ENCODE measurements at regions of chr19 and their contacts with region 1.

Region 1: GRCh38 chr19:51735759-51736449 is 12.1 kb upstream of the HAS1 start:
- DNase-seq: peak; percentile 97 to 100 (median 99)
- H3K4me3 ChIP-seq: peak overlapping the region in 1 of 3 experiments; percentile 58
- H3K4me3 Mint-ChIP-seq: peak overlapping the region; percentile 59 to 85
- H3K27ac ChIP-seq: peak overlapping the region; percentile 12 to 81
- H3K27ac Mint-ChIP-seq: peak overlapping the region; percentile 89 to 99 (median 92)
- H3K4me1 ChIP-seq: peaks cover 63 to 66% of the 10 kb centered on the region in 2 donors
- H3K4me1 Mint-ChIP-seq: peaks cover 60% of the 10 kb centered on the region
- H3K27me3 ChIP-seq: no peaks in the 10 kb centered on the region
- H3K27me3 Mint-ChIP-seq: peaks cover 8 to 18% (median 11%) of the 10 kb centered on the region in 3 donors
- CTCF ChIP-seq: no peak

Region 2: DNA sequence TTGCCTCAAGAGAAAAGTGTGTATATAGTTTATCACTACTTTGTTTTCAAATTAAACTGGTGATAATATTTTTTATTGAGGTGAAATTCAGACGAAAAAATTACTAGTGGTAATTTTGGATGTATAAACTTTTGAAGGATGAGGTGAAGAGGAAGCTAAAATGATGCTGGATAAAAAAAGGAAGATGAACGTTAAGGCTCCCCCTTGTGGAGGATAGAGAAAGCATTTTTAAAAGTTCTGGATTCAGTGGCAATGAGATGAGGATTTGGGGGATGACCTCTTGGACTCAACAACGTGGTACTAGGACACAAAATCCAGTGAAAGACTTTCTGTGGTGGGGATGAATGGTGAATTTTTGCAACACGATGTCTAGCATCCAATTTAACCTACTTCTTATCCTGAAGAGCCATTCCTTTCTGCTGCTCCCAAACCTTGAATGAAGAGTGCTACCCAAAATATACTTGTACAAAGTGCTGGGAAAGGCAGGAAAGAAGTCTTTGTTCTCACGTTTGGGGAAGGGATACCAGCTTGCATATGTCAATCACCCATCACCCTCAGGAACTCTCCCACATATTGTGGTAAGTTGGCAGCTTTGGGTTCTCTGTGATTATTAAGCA is 98.4 kb before region 1 on chr19:
- intact Hi-C with region 1: no loop called
- DNase-seq: peak in 1 of 3 donors; percentile 55
- H3K4me3 ChIP-seq: no peak overlapping the region
- H3K4me3 Mint-ChIP-seq: no peak overlapping the region
- H3K27ac ChIP-seq: no peak overlapping the region
- H3K27ac Mint-ChIP-seq: peak overlapping the region in 3 of 7 donors; percentile 62 to 86 (median 63)
- H3K4me1 ChIP-seq: peaks cover 33 to 36% of the 10 kb centered on the region in 2 donors
- H3K4me1 Mint-ChIP-seq: peaks cover 59% of the 10 kb centered on the region
- H3K27me3 ChIP-seq: no peaks in the 10 kb centered on the region
- H3K27me3 Mint-ChIP-seq: no peaks in the 10 kb centered on the region
- CTCF ChIP-seq: peak; percentile 89

Region 3: GRCh38 chr19:51703575-51704515 is 32.1 kb before region 1 on chr19:
- intact Hi-C with region 1: loop called in 1 of 2 experiments (anchors 2 kb)
- DNase-seq: peak; percentile 88 to 94 (median 93)
- H3K4me3 ChIP-seq: peak overlapping the region; percentile 70 to 91 (median 75)
- H3K4me3 Mint-ChIP-seq: peak overlapping the region; percentile 89 to 94
- H3K27ac ChIP-seq: peak overlapping the region; percentile 89 to 95
- H3K27ac Mint-ChIP-seq: peak overlapping the region; percentile 93 to 99 (median 96)
- H3K4me1 ChIP-seq: peaks cover 31 to 39% of the 10 kb centered on the region in 2 donors
- H3K4me1 Mint-ChIP-seq: peaks cover 37% of the 10 kb centered on the region
- H3K27me3 ChIP-seq: peaks cover 9 to 26% of the 10 kb centered on the region in 2 donors
- H3K27me3 Mint-ChIP-seq: peaks cover 38 to 47% (median 40%) of the 10 kb centered on the region in 3 donors
- CTCF ChIP-seq: peak; percentile 33

Region 4: DNA sequence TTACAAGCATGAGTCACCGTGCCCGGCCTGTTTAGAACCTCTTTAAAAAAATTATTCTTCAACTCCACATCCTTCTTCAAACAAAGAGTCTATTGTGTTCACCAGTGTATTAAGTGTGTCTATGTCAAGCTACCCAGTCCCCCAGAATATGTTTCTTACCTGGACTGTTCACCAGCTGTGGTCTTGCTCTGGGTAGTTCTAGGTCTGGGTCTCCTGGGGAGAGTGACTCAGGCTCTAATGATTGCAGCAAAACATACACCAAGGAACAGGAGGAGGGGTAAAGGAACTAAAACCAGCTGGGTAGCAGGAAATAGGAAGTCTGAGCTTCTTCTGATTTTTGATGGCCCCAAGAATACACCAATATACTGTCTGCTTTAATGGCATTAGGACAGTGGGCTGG is 15.8 kb after region 1 on chr19 and contains the start of gene FPR1:
- intact Hi-C with region 1: loop called in 1 of 2 experiments (anchors 2 kb)
- DNase-seq: peak; percentile 89 to 95 (median 92)
- H3K4me3 ChIP-seq: peak within 1 kb of the TSS; percentile 52 to 100 (median 98)
- H3K4me3 Mint-ChIP-seq: peak within 1 kb of the TSS; percentile 95 to 99
- H3K27ac ChIP-seq: peak within 1 kb of the TSS; percentile 65 to 96
- H3K27ac Mint-ChIP-seq: peak within 1 kb of the TSS; percentile 98 to 100 (median 99)
- H3K4me1 ChIP-seq: peaks cover 84 to 97% of the 10 kb centered on the region in 2 donors
- H3K4me1 Mint-ChIP-seq: peaks cover 89% of the 10 kb centered on the region
- H3K27me3 ChIP-seq: no peaks in the 10 kb centered on the region
- H3K27me3 Mint-ChIP-seq: peaks cover 0 to under 1% (median 0%) of the 10 kb centered on the region in 3 donors
- CTCF ChIP-seq: no peak
- polyA plus RNA-seq, gene FPR1: 372 to 1,265 (median 991) TPM

Region 5: GRCh38 chr19:51771376-51772130 is 35.6 kb after region 1 on chr19:
- intact Hi-C with region 1: loop called (anchors 2 to 5 kb)
- DNase-seq: peak; percentile 89 to 97 (median 95)
- H3K4me3 ChIP-seq: peak overlapping the region in 1 of 3 experiments; percentile 56
- H3K4me3 Mint-ChIP-seq: peak overlapping the region in 1 of 2 donors; percentile 72
- H3K27ac ChIP-seq: peak overlapping the region; percentile 90 to 94
- H3K27ac Mint-ChIP-seq: peak overlapping the region; percentile 93 to 98 (median 97)
- H3K4me1 ChIP-seq: peaks cover 58 to 76% of the 10 kb centered on the region in 2 donors
- H3K4me1 Mint-ChIP-seq: peaks cover 69% of the 10 kb centered on the region
- H3K27me3 ChIP-seq: no peaks in the 10 kb centered on the region
- H3K27me3 Mint-ChIP-seq: peaks cover 0 to 9% (median 3%) of the 10 kb centered on the region in 3 donors
- CTCF ChIP-seq: no peak

Region 6: GRCh38 chr19:51777570-51778462 is 41.9 kb after region 1 on chr19:
- intact Hi-C with region 1: loop called in 1 of 2 experiments (anchors 5 kb)
- DNase-seq: peak; percentile 81 to 93 (median 91)
- H3K4me3 ChIP-seq: no peak overlapping the region
- H3K4me3 Mint-ChIP-seq: peak overlapping the region in 1 of 2 donors; percentile 39
- H3K27ac ChIP-seq: no peak overlapping the region
- H3K27ac Mint-ChIP-seq: peak overlapping the region; percentile 10 to 86 (median 70)
- H3K4me1 ChIP-seq: peaks cover 55 to 70% of the 10 kb centered on the region in 2 donors
- H3K4me1 Mint-ChIP-seq: peaks cover 66% of the 10 kb centered on the region
- H3K27me3 ChIP-seq: no peaks in the 10 kb centered on the region
- H3K27me3 Mint-ChIP-seq: peaks cover 3% of the 10 kb centered on the region in 3 donors
- CTCF ChIP-seq: peak; percentile 84